Endothelial cell of umbilical vein (primary cell): ENCODE measurements at regions of chr6 and their contacts with region 1.

Region 1: DNA sequence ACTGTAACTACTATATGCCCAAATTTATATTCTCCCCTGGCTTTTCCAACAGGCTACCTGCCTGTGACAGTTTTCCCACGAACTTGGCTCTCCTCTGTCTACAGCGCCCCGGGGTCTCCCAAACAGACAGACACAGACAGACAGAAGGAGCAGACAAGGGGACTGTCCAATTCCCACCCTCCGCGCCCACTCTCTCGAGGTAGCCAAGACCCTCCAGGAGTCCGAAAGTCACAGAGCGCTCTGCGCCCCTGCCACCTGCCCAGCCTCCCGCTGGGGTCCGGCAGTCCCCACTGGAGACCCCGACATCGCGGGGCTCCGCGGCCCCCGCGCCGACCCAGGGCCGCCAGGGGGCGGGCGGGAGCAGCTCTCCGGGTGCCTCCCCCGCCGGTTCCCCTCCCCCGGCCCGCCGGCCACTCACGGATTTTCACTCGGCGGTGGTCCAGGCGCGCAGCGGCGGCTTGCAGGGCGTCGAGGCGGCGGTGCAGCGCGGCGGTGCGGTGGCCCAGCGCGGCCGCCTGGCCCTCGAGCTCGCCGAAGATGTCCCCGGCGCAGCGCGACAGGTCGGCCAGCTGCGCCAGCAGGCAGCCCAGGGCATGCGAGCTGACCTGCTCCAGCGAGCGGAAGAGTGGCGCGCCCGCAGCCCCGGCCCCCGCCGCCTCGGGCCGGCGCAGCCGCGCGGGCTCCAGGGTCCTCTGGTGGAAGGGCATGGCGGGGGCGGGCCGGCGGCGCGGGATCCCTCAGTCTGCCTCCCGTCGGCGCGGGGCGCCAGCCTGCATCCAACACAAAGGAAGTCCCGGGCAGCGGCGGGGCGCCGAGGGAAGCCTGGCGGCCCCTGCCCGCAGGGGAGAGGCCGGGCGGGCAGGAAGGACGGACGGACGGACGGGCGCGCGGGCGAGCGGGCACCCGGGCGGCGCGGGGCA is 81.3 kb upstream of the CCDC28A start:
- DNase-seq: peak; percentile 68
- H3K4me3 ChIP-seq: peak overlapping the region; percentile 74 to 90 (median 75)
- H3K27ac ChIP-seq: peak overlapping the region; percentile 46
- H3K4me1 ChIP-seq: peaks cover 25% of the 10 kb centered on the region
- H3K27me3 ChIP-seq: no peaks in the 10 kb centered on the region
- CTCF ChIP-seq: peak; percentile 82 to 93
- POLR2A ChIP-seq: no peak

Region 2: GRCh38 chr6:137497721-137498463 is 1194.4 kb before region 1 on chr6:
- CTCF ChIA-PET with region 1: no interaction called
- POLR2A ChIA-PET with region 1: no interaction called
- dilution Hi-C with region 1: no loop called
- intact Hi-C with region 1: no loop called
- DNase-seq: no peak
- H3K4me3 ChIP-seq: no peak overlapping the region
- H3K27ac ChIP-seq: no peak overlapping the region
- H3K4me1 ChIP-seq: no peaks in the 10 kb centered on the region
- H3K27me3 ChIP-seq: peaks cover 62 to 95% of the 10 kb centered on the region in 2 experiments
- CTCF ChIP-seq: no peak
- POLR2A ChIP-seq: no peak

Region 3: GRCh38 chr6:138428944-138429598 is 263.2 kb before region 1 on chr6:
- CTCF ChIA-PET with region 1: interaction called, 5 read pairs
- POLR2A ChIA-PET with region 1: no interaction called
- dilution Hi-C with region 1: no loop called
- intact Hi-C with region 1: loop called (anchors 10 kb)
- DNase-seq: peak; percentile 62
- H3K4me3 ChIP-seq: no peak overlapping the region
- H3K27ac ChIP-seq: no peak overlapping the region
- H3K4me1 ChIP-seq: no peaks in the 10 kb centered on the region
- H3K27me3 ChIP-seq: no peaks in the 10 kb centered on the region
- CTCF ChIP-seq: peak; percentile 36 to 41
- POLR2A ChIP-seq: no peak

Region 4: GRCh38 chr6:138545621-138545980 is 146.7 kb before region 1 on chr6:
- CTCF ChIA-PET with region 1: interaction called, 3 read pairs
- POLR2A ChIA-PET with region 1: no interaction called
- dilution Hi-C with region 1: no loop called
- intact Hi-C with region 1: loop called (anchors 5 kb)
- DNase-seq: peak; percentile 87
- H3K4me3 ChIP-seq: peak overlapping the region in 2 of 3 experiments; percentile 37 to 76
- H3K27ac ChIP-seq: peak overlapping the region; percentile 94
- H3K4me1 ChIP-seq: peaks cover 61% of the 10 kb centered on the region
- H3K27me3 ChIP-seq: no peaks in the 10 kb centered on the region
- CTCF ChIP-seq: no peak
- POLR2A ChIP-seq: peak; percentile 80

Region 5: GRCh38 chr6:138560130-138560860 is 132.0 kb before region 1 on chr6:
- CTCF ChIA-PET with region 1: no interaction called
- POLR2A ChIA-PET with region 1: no interaction called
- dilution Hi-C with region 1: no loop called
- intact Hi-C with region 1: no loop called
- DNase-seq: no peak
- H3K4me3 ChIP-seq: no peak overlapping the region
- H3K27ac ChIP-seq: no peak overlapping the region
- H3K4me1 ChIP-seq: peaks cover 14% of the 10 kb centered on the region
- H3K27me3 ChIP-seq: no peaks in the 10 kb centered on the region
- CTCF ChIP-seq: no peak
- POLR2A ChIP-seq: no peak

Region 6: DNA sequence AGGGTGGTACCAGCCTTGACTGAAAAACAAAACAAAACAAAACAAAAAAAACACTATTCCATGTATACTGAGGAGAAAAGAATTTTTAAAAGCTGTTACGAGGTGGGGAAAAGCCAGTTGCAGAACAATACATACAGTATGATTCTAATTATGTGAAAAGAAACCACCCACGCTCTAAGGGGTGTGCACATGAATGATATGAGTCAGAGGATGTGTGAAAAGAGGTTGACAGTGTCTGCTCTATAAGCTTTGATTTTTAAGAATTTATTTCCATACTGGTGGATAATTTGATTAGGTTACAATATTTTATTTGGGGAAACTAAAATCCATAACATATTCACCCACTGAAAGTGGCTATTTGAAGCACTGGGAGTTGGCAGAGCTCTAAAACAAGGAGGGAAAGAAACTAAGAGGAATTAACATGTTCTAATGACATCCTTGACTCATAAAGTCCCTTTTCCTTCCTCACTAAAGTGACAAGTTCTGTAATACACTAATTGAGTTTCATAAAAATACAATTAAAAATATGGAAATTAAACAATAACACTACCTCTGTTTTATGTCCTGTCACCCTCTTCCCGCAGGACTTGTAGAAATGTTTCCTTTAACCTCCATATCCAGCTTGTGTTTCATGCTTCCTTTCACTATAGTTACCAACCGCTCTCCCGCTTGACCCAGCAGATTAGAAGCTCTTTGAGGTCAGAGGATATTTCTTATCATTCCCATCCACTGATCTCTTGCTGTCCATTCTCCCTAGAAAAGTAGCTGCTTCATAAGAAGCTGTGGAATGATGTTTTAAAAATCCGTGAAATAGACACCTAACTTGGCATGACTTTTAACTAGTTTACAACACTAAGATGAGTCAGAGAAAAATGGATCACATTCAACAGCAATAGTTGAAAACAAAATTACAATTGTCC is 37.3 kb before region 1 on chr6:
- CTCF ChIA-PET with region 1: interaction called, 22 read pairs
- POLR2A ChIA-PET with region 1: no interaction called
- dilution Hi-C with region 1: no loop called
- intact Hi-C with region 1: loop called (anchors 2 kb)
- DNase-seq: peak; percentile 82
- H3K4me3 ChIP-seq: peak overlapping the region in 1 of 3 experiments; percentile 20
- H3K27ac ChIP-seq: peak overlapping the region; percentile 75
- H3K4me1 ChIP-seq: peaks cover 30% of the 10 kb centered on the region
- H3K27me3 ChIP-seq: no peaks in the 10 kb centered on the region
- CTCF ChIP-seq: no peak
- POLR2A ChIP-seq: no peak

Region 7: DNA sequence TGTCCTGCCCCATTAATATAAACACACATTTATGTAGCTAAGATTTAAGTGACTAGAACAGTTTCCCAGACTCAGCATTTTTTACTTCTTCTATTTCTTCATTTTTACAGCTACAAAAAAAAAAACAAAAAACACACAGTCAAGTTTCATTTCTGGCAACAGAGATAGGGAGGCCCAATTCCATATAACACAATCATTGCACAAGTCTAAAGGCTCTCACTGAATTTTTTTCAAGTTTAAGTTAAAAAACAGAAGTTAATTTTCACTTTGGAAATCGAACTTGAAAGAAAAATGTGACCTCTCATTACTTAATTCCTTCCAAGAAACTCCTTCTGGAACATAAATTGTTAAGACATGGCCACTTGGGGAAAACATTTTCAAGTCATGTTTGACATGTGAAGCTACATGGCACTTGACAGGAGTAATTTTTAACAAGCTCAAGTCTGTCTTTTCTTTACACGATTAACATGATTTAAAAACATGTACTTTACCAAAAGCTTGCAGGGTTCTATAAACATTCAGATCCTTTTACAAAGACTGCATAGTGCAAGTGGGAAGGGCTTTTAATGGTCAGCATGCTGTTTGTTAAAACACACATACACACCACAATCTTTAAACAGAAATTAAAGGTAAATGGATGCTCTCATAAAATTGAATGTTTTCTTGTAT is 18.8 kb before region 1 on chr6:
- CTCF ChIA-PET with region 1: interaction called, 14 read pairs
- POLR2A ChIA-PET with region 1: no interaction called
- dilution Hi-C with region 1: no loop called
- intact Hi-C with region 1: no loop called
- DNase-seq: no peak
- H3K4me3 ChIP-seq: no peak overlapping the region
- H3K27ac ChIP-seq: no peak overlapping the region
- H3K4me1 ChIP-seq: no peaks in the 10 kb centered on the region
- H3K27me3 ChIP-seq: no peaks in the 10 kb centered on the region
- CTCF ChIP-seq: no peak
- POLR2A ChIP-seq: no peak

Region 8: DNA sequence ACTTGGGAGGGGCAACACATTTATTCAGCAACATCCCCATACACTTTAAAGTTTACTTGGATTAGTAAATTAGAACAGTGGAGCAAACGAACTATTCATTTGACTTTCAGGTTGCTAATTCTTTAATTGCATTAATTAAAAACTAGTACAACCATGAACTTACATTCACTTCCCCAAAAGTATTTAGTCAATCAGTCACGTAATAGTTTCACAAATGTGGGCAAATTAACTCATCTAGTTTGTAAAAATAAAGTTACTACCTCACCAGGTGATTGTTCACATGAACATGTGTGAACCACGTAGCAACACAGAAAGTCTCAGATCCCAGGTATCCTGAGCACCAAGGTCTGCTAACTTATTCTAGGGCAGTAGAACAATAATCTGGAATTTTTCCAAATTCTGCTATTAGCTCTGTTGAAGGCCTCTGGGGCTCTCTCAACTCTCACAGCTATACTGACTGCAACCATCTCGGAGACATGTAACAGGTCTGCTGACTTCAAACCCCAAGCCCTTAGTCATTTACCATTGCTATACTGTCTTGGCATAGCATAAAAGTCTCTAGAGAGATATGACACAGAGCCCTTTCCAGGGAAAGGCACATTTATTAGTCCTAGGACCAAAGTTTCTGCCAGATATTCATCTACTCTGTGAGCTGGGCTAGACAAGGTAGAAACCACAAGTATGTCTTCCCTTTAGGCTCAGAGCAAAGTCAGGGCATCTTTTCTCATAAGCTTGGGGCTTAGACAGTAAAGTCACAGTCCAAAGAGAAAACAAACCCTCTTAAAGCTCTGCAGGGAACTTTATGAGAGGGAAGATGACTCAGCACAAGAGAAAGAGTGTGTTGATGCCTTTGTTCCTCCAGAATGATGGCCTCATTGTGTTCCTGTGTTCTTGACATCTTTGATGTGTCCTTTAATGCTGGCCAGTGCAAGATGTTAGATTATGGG is 30.4 kb after region 1 on chr6:
- CTCF ChIA-PET with region 1: interaction called, 9 read pairs
- POLR2A ChIA-PET with region 1: no interaction called
- dilution Hi-C with region 1: no loop called
- intact Hi-C with region 1: loop called (anchors 2 kb)
- DNase-seq: peak; percentile 69
- H3K4me3 ChIP-seq: no peak overlapping the region
- H3K27ac ChIP-seq: peak overlapping the region; percentile 62
- H3K4me1 ChIP-seq: peaks cover 38% of the 10 kb centered on the region
- H3K27me3 ChIP-seq: no peaks in the 10 kb centered on the region
- CTCF ChIP-seq: no peak
- POLR2A ChIP-seq: no peak

Region 9: DNA sequence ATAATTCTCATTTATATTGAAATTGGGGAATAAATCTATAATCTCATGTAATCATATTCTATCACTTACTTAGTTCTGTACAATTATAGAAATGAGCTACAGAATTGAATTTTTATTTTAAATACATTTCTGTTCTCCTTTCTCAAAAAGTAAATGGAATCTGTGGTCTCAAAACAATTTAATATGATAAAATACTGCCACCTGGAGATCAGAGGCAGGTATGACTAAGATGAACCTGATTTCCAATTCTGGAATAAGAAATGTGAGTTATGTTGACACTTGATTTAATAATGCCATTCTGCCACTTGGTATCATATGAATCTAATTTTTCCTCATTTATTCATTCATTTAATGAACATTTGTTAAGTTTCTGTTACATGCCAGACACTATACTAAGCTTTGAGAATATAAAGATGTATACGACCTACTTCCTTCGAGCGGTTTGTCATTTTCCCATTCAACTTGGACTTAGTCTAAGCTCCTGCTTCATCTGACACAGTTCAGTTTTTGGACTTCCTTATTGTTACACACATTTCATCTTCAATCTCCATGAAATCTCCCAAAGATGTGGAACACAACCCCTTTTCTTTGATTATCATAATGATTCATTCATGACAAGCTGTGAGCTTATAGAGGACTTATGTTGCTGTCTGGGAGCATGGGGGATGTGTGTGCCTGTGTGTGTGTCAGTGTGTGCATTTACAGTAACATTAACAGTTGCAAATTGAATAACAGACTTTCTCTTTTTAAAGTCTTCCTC is 73.8 kb after region 1 on chr6:
- CTCF ChIA-PET with region 1: interaction called, 91 read pairs
- POLR2A ChIA-PET with region 1: no interaction called
- dilution Hi-C with region 1: no loop called
- intact Hi-C with region 1: loop called (anchors 1 kb)
- DNase-seq: peak; percentile 64
- H3K4me3 ChIP-seq: no peak overlapping the region
- H3K27ac ChIP-seq: no peak overlapping the region
- H3K4me1 ChIP-seq: peaks cover 32% of the 10 kb centered on the region
- H3K27me3 ChIP-seq: no peaks in the 10 kb centered on the region
- CTCF ChIP-seq: peak; percentile 22 to 40
- POLR2A ChIP-seq: no peak